ENCODE measurements at regions of chrX and their contacts with region 1.

Region 1: DNA sequence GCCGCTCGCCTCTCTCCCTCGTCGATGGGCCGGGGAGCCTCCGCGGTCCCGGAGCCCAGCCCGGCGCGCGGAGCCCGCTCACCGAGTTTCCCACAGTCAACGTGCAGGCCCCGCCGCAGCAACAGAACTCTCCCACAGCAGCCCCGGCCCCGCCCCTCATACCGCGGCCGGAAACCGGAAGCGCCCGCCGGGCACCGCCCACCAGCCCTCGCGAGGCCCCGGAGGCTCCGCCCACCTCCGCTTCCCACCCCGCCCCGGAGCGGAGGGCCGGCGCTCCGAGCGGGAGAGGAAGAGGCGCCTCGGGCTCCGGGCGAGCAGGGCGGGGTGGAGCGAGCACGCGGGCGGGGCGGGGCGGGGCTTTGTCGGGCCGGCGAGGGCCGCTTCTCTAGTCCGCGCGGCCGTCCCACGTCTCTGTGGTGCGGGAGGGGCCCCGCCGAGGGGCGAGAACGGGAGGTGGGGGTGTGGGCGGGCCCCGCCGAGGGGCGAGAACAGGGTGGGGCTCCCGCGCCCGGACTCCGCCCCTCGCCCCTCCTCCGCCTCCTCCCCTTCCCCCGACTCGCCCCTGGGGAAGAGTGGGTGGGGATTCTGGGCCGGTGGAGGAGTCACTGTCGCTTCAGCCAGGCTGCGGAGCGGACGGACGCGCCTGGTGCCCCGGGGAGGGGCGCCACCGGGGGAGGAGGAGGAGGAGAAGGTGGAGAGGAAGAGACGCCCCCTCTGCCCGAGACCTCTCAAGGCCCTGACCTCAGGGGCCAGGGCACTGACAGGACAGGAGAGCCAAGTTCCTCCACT is at the starts of genes ABCD1 and BCAP31:
- DNase-seq: peak; percentile 84
- ATAC-seq: peak; percentile 78
- H3K4me3 Mint-ChIP-seq: peak within 1 kb of the TSS; percentile 85
- H3K27ac Mint-ChIP-seq: peak within 1 kb of the TSS; percentile 86
- H3K4me1 Mint-ChIP-seq: peaks cover 48% of the 10 kb centered on the region
- H3K27me3 Mint-ChIP-seq: no peaks in the 10 kb centered on the region
- CTCF ChIP-seq: no peak
- total RNA-seq, gene ABCD1: 2.6 and 2.8 TPM in 2 replicates
- total RNA-seq, gene BCAP31: 90.5 and 90.7 TPM in 2 replicates

Region 2: DNA sequence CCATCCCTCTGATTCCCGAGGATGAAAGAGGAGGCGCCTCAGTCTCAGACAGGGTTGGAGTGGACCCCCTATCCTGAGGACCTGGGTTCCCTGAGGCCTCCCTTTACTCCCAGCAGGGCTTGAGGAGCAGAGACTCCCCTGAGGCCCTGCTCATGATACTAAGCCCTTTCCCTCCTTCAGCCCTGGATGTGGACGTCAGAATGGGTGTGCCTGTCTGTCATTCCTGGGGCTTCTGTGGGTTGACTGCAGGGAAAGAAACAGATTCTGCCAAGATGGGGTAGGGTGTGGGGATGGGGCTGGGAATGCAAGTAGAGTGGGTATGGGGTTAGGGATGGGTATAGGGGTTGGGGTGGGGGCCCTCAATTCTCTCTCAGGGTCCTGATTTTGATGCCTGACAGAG is 1607.1 kb before region 1 on chrX:
- CTCF ChIA-PET with region 1: no interaction called
- POLR2A ChIA-PET with region 1: no interaction called
- intact Hi-C with region 1: no loop called
- DNase-seq: no peak
- ATAC-seq: no peak
- H3K4me3 Mint-ChIP-seq: no peak overlapping the region
- H3K27ac Mint-ChIP-seq: no peak overlapping the region
- H3K4me1 Mint-ChIP-seq: no peaks in the 10 kb centered on the region
- H3K27me3 Mint-ChIP-seq: no peaks in the 10 kb centered on the region
- CTCF ChIP-seq: no peak

Region 3: GRCh38 chrX:153470435-153471363 is 253.7 kb before region 1 on chrX and contains the start of gene HAUS7:
- CTCF ChIA-PET with region 1: interaction called, 3 read pairs
- POLR2A ChIA-PET with region 1: no interaction called
- intact Hi-C with region 1: loop called (anchors 2 kb)
- DNase-seq: peak; percentile 69
- ATAC-seq: peak; percentile 88
- H3K4me3 Mint-ChIP-seq: peak within 1 kb of the TSS; percentile 83
- H3K27ac Mint-ChIP-seq: peak within 1 kb of the TSS; percentile 66
- H3K4me1 Mint-ChIP-seq: peaks cover 16% of the 10 kb centered on the region
- H3K27me3 Mint-ChIP-seq: no peaks in the 10 kb centered on the region
- CTCF ChIP-seq: no peak
- total RNA-seq, gene HAUS7: 39.2 and 42.7 TPM in 2 replicates

Region 4: DNA sequence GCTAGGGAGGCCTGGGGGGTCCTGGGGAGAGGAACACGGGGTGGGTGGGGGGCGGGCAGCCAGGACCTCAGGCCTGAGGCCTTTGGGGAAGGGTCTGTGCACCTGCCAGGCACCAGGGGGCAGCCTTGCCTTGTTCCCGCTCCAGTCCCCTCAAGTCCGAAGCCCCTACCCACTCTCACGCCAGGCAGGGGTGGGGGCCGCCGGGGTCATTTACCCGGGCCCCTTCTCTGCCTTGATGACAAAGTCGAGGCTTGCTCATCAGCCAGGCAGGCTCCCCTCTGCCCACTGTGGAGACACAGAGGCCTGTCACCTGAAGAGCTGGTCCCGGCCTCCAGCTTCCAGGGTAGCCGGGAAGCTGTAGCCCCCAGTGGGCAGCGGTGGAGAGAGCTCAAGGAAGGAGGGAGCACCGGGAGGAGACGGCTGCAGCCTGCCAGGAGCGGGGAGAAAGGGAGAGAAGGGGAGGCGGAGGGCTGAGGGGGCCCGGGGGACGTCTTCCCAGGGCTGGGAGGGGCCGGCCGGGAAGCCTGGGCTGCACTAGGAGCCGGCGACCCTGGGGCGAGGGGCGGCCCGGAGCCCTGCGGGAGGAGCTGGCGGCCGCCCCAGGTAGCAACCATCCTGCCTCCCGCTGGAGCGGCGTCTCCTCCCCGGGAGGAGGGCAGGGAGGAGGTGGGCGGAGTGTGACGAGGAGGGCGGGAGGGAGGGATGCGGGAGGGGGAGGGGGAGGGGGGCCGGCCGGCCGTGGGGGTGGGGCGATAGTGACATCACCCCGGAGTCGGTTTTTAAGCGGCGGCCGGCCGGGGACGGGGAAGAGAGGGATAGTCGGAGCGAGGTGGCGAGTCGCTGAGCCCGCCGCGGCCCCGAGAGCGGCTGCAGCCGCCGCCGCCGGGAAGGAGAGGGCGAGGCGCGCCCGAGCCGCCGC is 37.1 kb before region 1 on chrX and contains the start of gene SLC6A8:
- CTCF ChIA-PET with region 1: no interaction called
- POLR2A ChIA-PET with region 1: interaction called, 3 read pairs
- intact Hi-C with region 1: loop called (anchors 5 kb)
- DNase-seq: peak; percentile 34
- ATAC-seq: peak; percentile 68
- H3K4me3 Mint-ChIP-seq: peak within 1 kb of the TSS; percentile 83
- H3K27ac Mint-ChIP-seq: no peak within 1 kb of the TSS
- H3K4me1 Mint-ChIP-seq: no peaks in the 10 kb centered on the region
- H3K27me3 Mint-ChIP-seq: peaks cover 3% of the 10 kb centered on the region
- CTCF ChIP-seq: no peak
- total RNA-seq, gene SLC6A8: 0.81 and 1.2 TPM in 2 replicates

Region 5: DNA sequence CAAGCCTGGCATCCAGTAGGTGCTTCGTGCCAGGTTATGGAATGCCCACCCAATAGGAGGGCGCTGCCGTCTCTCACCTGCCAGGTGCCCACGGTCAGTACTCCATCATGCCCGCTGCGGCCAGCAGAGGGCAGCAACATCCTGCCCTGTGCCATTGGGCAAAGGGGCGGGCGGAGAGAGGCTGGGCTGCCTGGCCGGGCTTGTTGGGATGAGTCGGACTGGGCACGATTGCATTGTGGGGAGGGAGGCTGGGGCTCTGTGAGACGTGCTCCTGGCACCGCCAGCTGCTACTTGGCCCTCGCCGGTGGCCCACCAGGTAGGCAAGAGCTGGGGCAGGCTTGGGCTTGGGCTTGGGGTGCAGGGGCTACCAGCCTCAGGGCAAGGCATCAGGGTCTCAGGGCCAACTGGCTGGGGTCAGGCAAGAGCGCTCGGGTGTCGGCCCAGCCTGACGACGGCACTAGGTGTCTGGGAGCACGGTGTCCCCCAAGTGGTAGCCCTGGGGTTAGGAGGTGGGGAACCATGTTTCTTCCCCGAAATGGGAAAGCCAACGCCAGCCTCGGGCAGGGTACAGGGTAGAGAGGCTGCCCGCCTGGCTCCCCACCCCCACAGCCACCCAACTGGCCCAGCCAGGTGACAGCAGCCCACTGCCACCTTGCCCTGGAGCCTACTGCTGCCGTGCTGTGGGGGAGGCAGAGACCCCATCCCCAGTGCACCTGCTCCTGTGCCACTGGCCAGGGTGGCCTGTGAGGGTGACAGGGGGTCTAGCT is 39.7 kb after region 1 on chrX and contains the start of gene PLXNB3:
- CTCF ChIA-PET with region 1: no interaction called
- POLR2A ChIA-PET with region 1: no interaction called
- intact Hi-C with region 1: loop called (anchors 5 kb)
- DNase-seq: peak; percentile 68
- ATAC-seq: peak; percentile 90
- H3K4me3 Mint-ChIP-seq: no peak within 1 kb of the TSS
- H3K27ac Mint-ChIP-seq: no peak within 1 kb of the TSS
- H3K4me1 Mint-ChIP-seq: peaks cover 12% of the 10 kb centered on the region
- H3K27me3 Mint-ChIP-seq: no peaks in the 10 kb centered on the region
- CTCF ChIP-seq: peak; percentile 34
- total RNA-seq, gene PLXNB3: not detected in 2 replicates

Region 6: DNA sequence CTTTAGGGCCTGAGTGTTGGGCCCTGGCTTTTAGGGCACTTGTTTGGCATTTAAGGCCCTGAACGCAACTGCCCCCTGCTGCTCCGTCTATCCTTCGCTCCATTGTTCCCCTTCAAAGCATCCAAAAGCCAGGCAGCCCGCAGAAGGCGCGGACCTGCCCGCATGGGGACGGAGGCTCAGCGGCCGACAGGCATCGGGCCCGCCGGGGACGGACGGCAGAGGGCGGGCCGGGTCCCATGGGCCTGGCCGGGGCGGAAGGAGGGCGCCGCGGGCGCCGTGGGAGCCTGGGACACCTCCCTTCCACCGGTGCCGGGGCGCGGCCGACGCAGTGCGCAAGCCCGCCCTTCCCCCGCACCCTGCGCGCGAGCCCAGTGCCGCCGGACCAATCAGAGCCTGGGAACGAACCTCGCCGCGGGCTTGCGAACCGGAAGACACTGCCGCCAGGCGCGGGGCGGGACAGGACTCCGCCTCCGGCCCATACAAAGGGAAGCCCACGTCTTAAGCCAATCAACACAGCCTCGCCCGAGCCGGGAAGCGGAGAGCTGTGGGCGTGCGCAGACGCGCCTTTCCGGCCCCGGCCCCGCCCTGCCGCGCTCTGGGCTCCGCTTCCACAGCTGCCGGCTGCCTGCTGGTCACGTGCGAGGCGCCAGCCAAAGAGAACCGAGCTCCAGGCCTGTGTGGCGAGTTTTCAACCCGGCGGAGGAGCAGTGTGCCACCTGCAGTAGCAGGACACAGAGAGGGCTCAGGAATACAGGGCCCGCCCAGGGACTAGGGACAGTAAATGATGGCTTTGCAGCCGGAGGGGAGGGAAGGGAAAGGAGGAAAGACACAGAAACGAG is 203.7 kb after region 1 on chrX:
- CTCF ChIA-PET with region 1: no interaction called
- POLR2A ChIA-PET with region 1: interaction called, 6 read pairs
- intact Hi-C with region 1: loop called (anchors 2 kb)
- DNase-seq: peak; percentile 83
- ATAC-seq: peak; percentile 66
- H3K4me3 Mint-ChIP-seq: peak overlapping the region; percentile 87
- H3K27ac Mint-ChIP-seq: peak overlapping the region; percentile 96
- H3K4me1 Mint-ChIP-seq: peaks cover 46% of the 10 kb centered on the region
- H3K27me3 Mint-ChIP-seq: no peaks in the 10 kb centered on the region
- CTCF ChIP-seq: no peak

Region 7: DNA sequence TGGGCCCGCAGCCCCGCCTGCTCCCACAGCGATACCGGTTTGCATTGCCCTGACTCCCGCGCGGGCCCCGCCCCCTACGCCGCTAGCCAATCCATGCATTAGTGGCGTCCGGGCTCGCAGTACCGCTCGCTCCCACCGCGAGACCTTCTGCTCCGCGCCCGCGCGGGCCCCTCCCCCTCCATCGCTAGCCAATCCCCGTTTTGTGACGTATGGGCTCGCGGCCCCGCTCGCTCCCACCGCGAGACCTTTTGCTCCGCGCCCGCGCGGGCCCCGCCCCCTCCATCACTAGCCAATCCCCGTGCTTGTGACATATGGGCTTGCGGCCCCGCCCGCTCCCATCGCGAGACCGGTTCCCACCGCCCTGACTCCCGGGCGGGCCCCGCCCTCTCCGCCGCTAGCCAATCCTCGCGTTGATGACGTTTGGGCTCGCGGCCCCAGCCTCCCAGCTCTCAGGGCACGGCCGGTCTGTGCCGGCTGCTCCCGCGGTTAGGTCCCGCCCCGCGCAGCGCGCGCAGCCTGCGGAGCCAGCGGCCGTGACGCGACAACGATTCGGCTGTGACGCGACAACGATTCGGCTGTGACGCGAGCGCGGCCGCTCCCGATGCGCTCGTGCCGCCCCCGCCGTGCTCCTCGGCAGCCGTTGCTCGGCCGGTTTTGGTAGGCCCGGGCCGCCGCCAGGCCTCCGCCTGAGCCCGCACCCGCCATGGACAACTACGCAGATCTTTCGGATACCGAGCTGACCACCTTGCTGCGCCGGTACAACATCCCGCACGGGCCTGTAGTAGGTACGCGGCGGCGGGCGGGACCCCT is 654.5 kb after region 1 on chrX and contains the start of gene EMD:
- CTCF ChIA-PET with region 1: no interaction called
- POLR2A ChIA-PET with region 1: no interaction called
- intact Hi-C with region 1: loop called (anchors 10 kb)
- DNase-seq: peak; percentile 87
- ATAC-seq: peak; percentile 83
- H3K4me3 Mint-ChIP-seq: peak within 1 kb of the TSS; percentile 83
- H3K27ac Mint-ChIP-seq: peak within 1 kb of the TSS; percentile 83
- H3K4me1 Mint-ChIP-seq: peaks cover 18% of the 10 kb centered on the region
- H3K27me3 Mint-ChIP-seq: no peaks in the 10 kb centered on the region
- CTCF ChIP-seq: no peak
- total RNA-seq, gene EMD: 68.4 and 70.2 TPM in 2 replicates